Left colon (tissue), 2 donors: ENCODE measurements at regions of chrX and their contacts with region 1.

Region 1: DNA sequence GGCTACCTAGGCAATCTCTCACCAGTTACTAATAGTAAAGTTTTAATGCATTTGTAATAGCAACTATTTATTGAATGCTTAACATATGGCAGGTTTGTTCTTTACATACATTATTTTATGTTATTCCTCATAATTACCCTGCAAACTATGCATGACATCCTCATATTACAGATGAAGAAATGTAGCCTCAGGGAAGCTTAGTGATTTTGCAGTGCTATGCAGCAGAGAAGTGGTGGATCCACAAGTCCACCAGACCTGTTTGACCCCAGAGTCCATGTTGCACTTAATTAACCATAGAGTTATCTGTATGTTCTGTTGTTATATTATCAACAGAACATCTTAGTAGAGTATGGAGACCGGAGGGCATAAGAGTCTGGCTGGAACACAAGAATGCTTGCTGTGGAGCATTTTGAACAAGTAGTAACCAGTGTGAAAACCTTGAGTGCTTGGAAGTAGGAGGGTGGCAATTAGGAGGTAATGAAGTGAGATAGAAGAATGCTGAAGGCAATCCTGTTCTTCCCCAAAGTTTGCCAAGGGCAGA is 78.6 kb downstream of the TRPC5 start:
- DNase-seq: no peak
- ATAC-seq: no peak

Region 2: DNA sequence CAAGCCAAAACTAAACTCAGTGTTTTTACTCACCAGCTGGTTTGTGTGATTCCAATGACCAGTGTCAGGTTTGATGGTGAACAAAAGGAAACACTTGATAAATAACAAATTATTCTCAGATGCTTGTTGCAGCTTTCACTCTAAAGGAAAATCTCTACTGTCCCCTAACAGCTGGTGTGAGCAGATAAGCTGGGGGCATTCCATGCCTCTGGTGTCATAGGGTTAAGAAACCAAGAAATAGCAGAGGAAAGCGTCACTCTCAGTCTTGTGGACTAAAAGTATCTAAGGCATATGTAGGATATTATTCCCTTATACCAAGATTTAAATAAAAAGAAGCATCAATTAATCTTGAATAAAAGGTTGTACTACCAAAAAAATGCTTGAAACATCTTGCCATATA is 54.3 kb after region 1 on chrX:
- intact Hi-C with region 1: loop called in 1 of 2 experiments (anchors 10 kb)
- DNase-seq: no peak
- ATAC-seq: no peak

Region 3: DNA sequence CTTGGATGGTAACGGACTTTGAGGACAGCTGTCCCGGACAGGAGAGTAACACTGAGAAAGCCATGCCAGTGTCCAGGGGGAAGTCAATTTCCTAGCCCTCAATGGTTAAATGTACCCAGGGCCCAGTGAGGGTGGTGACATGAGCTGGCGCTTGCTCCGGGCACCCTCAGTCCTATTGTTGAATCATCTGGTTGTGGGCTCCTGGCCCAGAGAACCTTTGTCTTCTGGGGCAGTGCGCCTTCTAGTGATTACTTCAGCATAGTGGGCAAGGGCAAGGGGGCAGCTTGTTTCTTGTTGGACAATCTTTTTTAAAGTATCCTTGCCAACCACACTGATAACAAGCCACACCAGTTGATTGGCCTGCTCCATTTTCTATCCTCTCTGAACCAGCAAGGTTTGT is 109.5 kb after region 1 on chrX:
- intact Hi-C with region 1: no loop called
- DNase-seq: no peak
- ATAC-seq: no peak

Region 4: GRCh38 chrX:112760697-112761096 is 756.7 kb after region 1 on chrX:
- intact Hi-C with region 1: no loop called
- DNase-seq: no peak
- ATAC-seq: no peak